Activated CD4-positive, alpha-beta memory T cell treated with anti-CD3 and anti-CD28 coated beads, Interleukin-2, amount 10 ng/mL, durations not matched to agents 7 days and 5 days (primary cell): ENCODE measurements at regions of chr15 and their contacts with region 1.

Region 1: DNA sequence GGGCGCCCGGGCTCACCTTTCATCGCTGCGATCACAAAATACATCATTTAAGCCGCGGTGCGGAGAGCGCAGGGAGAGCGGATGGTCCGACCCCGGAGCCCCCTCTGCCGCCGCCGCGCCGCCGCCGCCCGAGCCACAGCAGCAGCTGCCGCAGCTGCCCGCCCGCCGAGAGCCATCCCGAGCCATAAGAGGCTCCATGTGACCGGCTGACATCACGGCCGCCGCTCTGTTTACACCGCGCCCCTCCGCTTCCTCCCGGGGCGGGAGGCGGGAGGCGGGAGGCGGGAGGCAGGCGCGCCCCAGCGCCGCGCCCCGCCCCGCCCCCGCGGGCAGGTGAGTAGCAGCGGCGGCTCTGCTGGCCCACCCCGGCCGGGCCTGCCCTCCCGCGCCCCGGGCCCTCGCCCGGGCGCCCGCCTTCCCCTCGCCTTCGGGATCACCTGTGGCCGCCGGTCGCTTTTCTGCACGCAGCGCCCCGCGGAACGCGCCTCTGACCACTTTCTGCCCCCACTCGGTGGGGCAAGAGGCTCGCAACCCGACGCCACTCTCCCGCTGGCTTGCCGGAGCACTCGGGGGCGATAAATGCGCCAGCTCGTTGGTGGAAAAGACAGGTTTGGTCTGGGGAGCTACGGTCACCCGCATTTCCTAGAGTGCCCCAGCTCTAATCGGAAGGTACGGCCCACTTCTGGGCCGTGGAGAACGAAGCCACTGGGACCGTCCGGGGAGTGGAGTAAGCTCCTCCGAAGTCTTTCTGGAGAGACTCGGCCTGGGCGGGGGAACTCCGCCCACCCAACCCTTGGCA is 113.6 kb upstream of the ICE2 start:
- DNase-seq: peak; percentile 90
- H3K4me3 Mint-ChIP-seq: peak overlapping the region; percentile 83
- H3K27ac Mint-ChIP-seq: peak overlapping the region; percentile 69
- H3K4me1 Mint-ChIP-seq: peaks cover 53% of the 10 kb centered on the region
- H3K27me3 Mint-ChIP-seq: peaks cover 1% of the 10 kb centered on the region

Region 2: GRCh38 chr15:60212536-60212935 is 380.0 kb before region 1 on chr15:
- CTCF ChIA-PET with region 1: no interaction called
- POLR2A ChIA-PET with region 1: no interaction called
- DNase-seq: no peak
- H3K4me3 Mint-ChIP-seq: no peak overlapping the region
- H3K27ac Mint-ChIP-seq: no peak overlapping the region
- H3K4me1 Mint-ChIP-seq: no peaks in the 10 kb centered on the region
- H3K27me3 Mint-ChIP-seq: peaks cover 36% of the 10 kb centered on the region

Region 3: GRCh38 chr15:60548101-60548500 is 44.5 kb before region 1 on chr15:
- CTCF ChIA-PET with region 1: interaction called, 3 read pairs
- POLR2A ChIA-PET with region 1: interaction called, 678 read pairs
- DNase-seq: peak; percentile 60
- H3K4me3 Mint-ChIP-seq: peak overlapping the region; percentile 65
- H3K27ac Mint-ChIP-seq: peak overlapping the region; percentile 95
- H3K4me1 Mint-ChIP-seq: peaks cover 96% of the 10 kb centered on the region
- H3K27me3 Mint-ChIP-seq: no peaks in the 10 kb centered on the region

Region 4: GRCh38 chr15:60649845-60650548 is 57.4 kb after region 1 on chr15:
- CTCF ChIA-PET with region 1: interaction called, 4 read pairs
- POLR2A ChIA-PET with region 1: interaction called, 12 read pairs
- DNase-seq: peak; percentile 39
- H3K4me3 Mint-ChIP-seq: peak overlapping the region; percentile 42
- H3K27ac Mint-ChIP-seq: peak overlapping the region; percentile 70
- H3K4me1 Mint-ChIP-seq: peaks cover 38% of the 10 kb centered on the region
- H3K27me3 Mint-ChIP-seq: peaks cover 1% of the 10 kb centered on the region

Region 5: GRCh38 chr15:60787837-60788691 is 195.5 kb after region 1 on chr15:
- CTCF ChIA-PET with region 1: interaction called, 3 read pairs
- POLR2A ChIA-PET with region 1: interaction called, 10 read pairs
- DNase-seq: peak; percentile 47
- H3K4me3 Mint-ChIP-seq: no peak overlapping the region
- H3K27ac Mint-ChIP-seq: peak overlapping the region; percentile 72
- H3K4me1 Mint-ChIP-seq: peaks cover 21% of the 10 kb centered on the region
- H3K27me3 Mint-ChIP-seq: no peaks in the 10 kb centered on the region

Region 6: DNA sequence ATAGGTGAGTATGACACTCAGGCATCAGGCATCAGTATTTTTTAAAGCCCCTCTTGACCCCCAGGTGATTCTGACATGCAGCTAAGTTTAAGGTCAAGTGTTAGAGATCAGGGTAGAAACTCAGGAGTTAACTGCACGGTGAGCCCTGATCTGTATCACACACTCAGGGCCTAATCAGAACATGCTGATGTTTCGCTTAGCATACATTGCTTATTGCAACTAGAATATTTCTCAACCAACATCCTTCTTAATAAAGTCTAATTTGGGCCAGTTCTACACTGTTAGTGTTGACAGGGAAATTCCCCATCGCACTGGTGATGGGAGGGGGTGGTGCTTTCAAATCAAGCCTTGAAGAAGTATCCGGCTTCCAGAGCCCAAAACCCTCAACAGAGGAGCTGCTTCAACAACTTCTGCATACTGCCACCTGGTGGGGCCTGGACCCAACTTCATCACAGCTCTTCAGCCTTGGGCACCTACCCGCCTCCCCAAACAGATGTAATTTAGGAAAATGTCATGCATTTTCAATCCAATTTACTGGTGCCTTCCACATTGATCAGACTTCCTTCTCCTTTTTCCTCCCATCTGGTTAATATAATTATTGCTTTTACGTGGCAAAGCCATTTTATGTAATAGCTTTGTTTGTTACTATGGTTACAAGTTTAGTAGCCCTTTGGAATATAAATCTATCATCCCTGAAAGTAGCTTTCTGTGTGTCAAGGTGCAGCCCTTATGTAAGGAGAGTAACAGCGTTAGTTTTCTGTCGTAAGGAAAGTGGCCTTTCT is 324.3 kb after region 1 on chr15:
- CTCF ChIA-PET with region 1: interaction called, 81 read pairs
- POLR2A ChIA-PET with region 1: interaction called, 27 read pairs
- DNase-seq: peak; percentile 86
- H3K4me3 Mint-ChIP-seq: no peak overlapping the region
- H3K27ac Mint-ChIP-seq: no peak overlapping the region
- H3K4me1 Mint-ChIP-seq: peaks cover 15% of the 10 kb centered on the region
- H3K27me3 Mint-ChIP-seq: peaks cover 6% of the 10 kb centered on the region